Activated B cell treated with CpG ODN at 0.5 μM for 24 hours (primary cell): ENCODE measurements at regions of chr12 and their contacts with region 1.

Region 1: GRCh38 chr12:88122666-88123065 is 19.2 kb downstream of the CEP290 start:
- DNase-seq: no peak
- ATAC-seq: no peak
- H3K4me3 Mint-ChIP-seq: no peak overlapping the region
- H3K27ac Mint-ChIP-seq: no peak overlapping the region
- H3K4me1 Mint-ChIP-seq: no peaks in the 10 kb centered on the region
- H3K27me3 Mint-ChIP-seq: no peaks in the 10 kb centered on the region
- CTCF ChIP-seq: no peak

Region 2: DNA sequence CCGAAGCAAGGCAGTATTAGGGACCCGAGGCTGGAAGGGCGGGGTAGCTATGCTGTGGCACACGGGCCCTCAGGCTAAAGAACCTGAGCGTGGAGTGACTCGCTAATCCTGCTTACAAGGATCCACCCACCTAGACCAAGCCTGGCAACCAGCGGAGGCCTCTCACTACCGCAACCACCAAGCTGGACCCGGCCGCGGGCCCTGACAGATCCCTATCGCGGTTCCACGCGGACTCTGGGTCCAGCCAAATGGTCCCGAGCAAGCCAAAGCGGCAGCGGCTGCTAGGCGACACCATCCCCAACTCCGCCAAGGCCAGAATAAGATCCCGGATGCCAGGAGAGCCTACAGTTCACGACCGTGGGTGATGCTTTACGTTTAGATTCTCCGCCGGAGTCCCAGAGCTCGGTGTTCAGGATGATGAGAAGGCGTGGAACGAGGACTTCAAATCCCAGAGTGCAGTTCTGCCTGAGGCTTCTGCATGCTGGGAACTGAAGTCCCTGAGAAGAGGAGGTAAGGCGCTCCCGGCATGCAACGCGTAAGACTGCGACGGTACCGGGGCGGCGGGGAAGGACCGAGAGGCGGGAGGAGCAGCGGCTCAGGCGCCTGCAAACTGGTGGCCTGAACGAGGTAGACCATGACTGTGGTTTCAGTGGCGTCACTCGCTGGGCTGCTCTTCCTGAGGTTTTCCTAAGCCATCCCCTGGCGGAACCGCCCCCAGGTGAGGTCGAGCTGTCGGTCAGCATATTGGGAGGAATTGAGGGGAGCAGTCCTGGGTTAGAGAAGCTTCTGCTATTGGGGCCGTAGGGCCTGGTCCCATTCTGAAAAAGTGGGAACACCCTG is 19.3 kb after region 1 on chr12 and contains the starts of genes CEP290 and TMTC3:
- CTCF ChIA-PET with region 1: no interaction called
- POLR2A ChIA-PET with region 1: interaction called, 3 read pairs
- intact Hi-C with region 1: loop called (anchors 2 kb)
- DNase-seq: peak; percentile 81
- ATAC-seq: peak; percentile 94
- H3K4me3 Mint-ChIP-seq: peak within 1 kb of the TSS; percentile 98
- H3K27ac Mint-ChIP-seq: peak within 1 kb of the TSS; percentile 96
- H3K4me1 Mint-ChIP-seq: peaks cover 30% of the 10 kb centered on the region
- H3K27me3 Mint-ChIP-seq: no peaks in the 10 kb centered on the region
- CTCF ChIP-seq: no peak
- total RNA-seq, gene CEP290: 13.7 and 15.0 TPM in 2 replicates
- total RNA-seq, gene TMTC3: 6.3 and 7.4 TPM in 2 replicates